ENCODE measurements at regions of chr21 and their contacts with region 1.

Region 1: GRCh38 chr21:45098867-45099266 is 24.5 kb downstream of the ADARB1 start:
- DNase-seq: peak in 1 of 3 donors; percentile 45
- H3K4me3 ChIP-seq: no peak overlapping the region
- H3K27ac ChIP-seq: no peak overlapping the region
- H3K4me1 ChIP-seq: peaks cover 0 to 6% (median under 1%) of the 10 kb centered on the region in 4 experiments
- H3K27me3 ChIP-seq: peaks cover 0 to 13% (median 2%) of the 10 kb centered on the region in 5 experiments

Region 2: DNA sequence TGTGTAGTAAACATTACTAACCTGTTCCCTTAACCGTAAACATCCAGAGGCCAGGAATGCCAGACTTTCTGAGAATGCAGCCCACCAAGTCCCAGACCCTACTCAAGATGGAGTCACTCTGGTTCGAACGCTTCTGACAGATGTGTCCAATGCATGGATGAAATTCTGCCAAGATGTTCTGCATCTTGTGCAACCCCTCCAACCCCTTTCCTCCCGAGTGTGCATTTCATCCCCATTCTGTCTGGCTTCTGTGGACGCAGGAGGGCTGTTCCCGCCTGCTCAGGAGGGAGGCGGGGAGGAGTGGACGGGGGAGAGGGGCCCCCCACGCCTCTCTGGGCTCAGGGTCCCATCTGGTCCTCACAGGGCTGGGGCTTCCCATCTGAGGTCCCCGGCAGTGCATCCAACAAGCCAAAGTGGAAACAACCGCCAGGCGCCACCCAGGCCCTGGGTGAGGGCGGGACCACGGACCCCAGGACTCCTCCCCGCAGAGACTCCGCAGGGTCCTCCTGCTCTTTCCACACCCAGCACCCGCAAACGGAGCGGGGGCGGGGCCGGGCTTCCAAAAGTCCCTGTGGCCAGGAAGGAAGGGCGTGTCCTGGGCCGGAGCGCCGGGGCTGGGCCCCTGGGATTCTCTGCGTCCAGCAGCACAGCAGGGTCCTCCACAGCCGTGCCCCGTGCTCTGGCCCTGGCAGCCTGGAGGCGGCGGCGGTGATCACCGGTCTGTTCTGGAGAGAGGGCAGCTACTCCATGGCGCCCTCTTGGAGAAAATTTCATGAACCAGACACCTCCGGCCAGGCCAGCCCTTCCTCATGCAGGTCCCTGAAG is 253.3 kb before region 1 on chr21:
- CTCF ChIA-PET with region 1: no interaction called
- POLR2A ChIA-PET with region 1: no interaction called
- DNase-seq: peak; percentile 65 to 82 (median 80)
- H3K4me3 ChIP-seq: peak overlapping the region; percentile 30 to 77 (median 59)
- H3K27ac ChIP-seq: peak overlapping the region in 1 of 2 experiments; percentile 22
- H3K4me1 ChIP-seq: peaks cover 0 to 28% (median 23%) of the 10 kb centered on the region in 4 experiments
- H3K27me3 ChIP-seq: no peaks in the 10 kb centered on the region

Region 3: DNA sequence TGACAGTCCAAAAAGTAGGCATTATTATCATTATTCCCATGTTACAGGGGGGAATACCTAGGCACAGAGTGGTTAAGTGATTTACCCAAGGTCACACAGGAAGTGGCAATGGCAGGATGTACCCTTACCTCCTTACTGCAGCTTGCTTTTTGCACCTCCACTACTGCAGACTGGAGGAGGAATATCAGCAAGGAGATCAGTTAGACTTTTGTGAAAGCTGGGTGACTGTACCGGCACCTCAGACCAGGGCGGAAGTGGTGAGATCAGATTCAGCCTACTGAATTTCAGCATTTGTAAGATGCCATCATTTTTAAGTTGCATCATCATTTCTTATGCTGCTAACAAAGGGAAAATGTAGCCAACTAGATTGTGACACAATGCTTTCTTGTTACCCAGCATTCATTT is 20.0 kb before region 1 on chr21:
- CTCF ChIA-PET with region 1: interaction called, 13 read pairs
- POLR2A ChIA-PET with region 1: interaction called, 3 read pairs
- DNase-seq: peak in 2 of 3 donors; percentile 35 to 47
- H3K4me3 ChIP-seq: no peak overlapping the region
- H3K27ac ChIP-seq: no peak overlapping the region
- H3K4me1 ChIP-seq: peaks cover 4 to 18% (median 10%) of the 10 kb centered on the region in 4 experiments
- H3K27me3 ChIP-seq: peaks cover 0 to 20% (median 12%) of the 10 kb centered on the region in 5 experiments

Region 4: DNA sequence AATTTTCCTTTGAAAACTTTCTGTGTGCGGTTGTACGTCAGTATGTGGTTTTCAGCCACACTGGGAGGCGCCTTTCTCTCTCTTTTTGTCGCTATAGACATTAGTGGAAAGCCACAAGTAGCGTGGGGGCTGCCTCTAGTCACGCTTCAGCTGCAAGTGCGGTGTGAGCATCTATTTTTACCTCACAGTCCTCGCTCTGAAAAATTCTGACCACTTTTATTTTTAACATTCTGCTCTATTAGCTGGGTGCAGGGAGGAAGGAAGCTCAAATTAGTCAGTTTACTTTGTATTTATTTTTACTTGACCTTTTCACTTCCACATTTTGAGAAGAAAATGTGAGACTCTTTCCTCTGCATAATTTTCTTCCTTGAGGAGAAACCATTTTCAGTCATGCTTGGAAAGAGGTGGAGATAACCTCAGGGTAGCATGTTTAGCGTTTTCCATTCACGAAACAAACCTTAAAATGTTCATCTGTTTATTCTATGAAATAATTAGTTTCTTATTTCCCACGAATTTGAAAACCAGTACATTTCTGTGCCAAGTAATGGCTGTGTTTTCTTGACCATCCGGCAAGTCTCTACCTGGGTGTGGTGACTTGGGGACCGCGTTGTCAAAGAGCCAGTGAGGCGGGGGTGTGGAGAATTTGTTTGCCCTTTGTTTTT is 11.1 kb after region 1 on chr21:
- CTCF ChIA-PET with region 1: interaction called, 69 read pairs
- POLR2A ChIA-PET with region 1: no interaction called
- DNase-seq: peak; percentile 68 to 81 (median 76)
- H3K4me3 ChIP-seq: peak overlapping the region in 6 of 7 experiments; percentile 42 to 69 (median 44)
- H3K27ac ChIP-seq: peak overlapping the region in 1 of 2 experiments; percentile 75
- H3K4me1 ChIP-seq: peaks cover 10 to 47% (median 32%) of the 10 kb centered on the region in 4 experiments
- H3K27me3 ChIP-seq: peaks cover 0 to 11% (median 0%) of the 10 kb centered on the region in 5 experiments

Region 5: GRCh38 chr21:45202889-45203288 is 104.0 kb after region 1 on chr21:
- CTCF ChIA-PET with region 1: no interaction called
- POLR2A ChIA-PET with region 1: no interaction called
- DNase-seq: no peak
- H3K4me3 ChIP-seq: no peak overlapping the region
- H3K27ac ChIP-seq: no peak overlapping the region
- H3K4me1 ChIP-seq: peaks cover 0 to 17% (median 14%) of the 10 kb centered on the region in 4 experiments
- H3K27me3 ChIP-seq: no peaks in the 10 kb centered on the region